Activated naive CD8-positive, alpha-beta T cell treated with anti-CD3 and anti-CD28 coated beads, Interleukin-2, amount 10 ng/mL, durations not matched to agents 7 days and 5 days (primary cell): ENCODE measurements at regions of chr10 and their contacts with region 1.

Region 1: DNA sequence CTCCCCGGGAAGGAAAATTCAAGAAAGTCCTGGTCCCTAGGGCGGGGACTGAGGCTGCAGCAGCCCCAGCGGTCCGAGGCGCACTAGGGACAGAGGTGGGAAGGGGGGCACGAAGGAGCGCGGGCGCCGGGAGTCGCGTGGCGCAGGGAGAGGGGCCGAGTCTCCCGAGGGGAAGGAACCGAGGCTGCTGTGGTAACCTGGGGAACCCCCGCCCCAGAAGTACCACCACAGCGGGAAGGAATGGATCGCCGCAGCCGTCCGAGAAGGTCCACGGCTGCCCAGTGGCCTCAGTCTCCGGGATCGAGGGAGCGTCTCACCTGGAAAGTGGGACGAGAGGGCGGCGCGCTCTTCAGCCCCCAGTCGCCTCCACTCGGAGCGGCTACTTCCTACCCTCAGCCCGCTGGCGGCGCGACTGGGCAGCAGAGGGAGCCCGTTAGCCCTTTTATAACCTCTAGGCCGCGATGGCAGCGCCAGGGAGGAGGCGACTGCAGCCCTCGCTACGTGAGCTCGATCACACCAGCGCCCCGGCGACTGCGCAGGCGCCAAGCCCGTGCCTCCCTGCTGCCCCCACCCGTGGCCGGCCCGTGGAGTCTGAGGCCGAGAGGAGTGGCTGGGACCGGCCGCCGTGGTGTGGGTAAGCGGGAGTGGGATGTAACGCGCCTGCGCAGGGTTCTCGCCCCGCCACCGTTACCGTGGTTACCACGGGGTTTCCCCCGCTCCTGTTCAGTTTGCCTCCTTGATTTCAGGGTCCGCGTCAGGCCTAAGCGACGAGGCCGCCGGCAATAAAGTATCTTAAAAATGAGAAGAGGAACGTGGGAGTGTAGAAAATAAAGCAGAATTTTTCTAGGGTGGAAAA is at the start of gene P4HA1:
- DNase-seq: peak; percentile 96
- ATAC-seq: peak; percentile 95
- H3K4me3 Mint-ChIP-seq: peak within 1 kb of the TSS; percentile 91
- H3K27ac Mint-ChIP-seq: peak within 1 kb of the TSS; percentile 92
- H3K4me1 Mint-ChIP-seq: peaks cover 30% of the 10 kb centered on the region
- H3K27me3 Mint-ChIP-seq: no peaks in the 10 kb centered on the region
- total RNA-seq, gene P4HA1: 47.3 to 51.2 TPM

Region 2: DNA sequence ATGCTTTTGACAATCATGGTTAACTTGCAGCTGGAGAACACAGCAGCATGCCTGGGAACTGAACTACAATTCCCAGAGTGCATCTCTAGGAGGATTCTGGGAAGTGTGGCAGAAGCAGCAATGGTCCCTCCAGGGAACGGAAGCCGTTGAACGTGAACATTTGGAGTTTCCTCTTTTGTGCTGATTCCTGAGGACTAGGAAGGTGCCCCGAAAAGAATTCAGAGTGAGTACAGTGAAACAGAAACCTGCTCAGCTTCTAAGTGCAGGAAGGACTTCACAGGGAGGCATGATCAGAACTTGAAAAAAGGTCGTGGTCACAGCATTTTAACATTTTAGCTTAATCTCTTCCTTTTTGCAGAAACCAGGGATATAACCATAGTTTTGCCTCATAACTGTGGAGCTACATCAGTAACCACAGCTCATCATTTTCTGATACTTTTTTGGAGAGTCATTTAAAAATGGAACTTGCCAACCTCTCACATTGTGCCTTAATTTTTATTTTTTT is 13.7 kb after region 1 on chr10 and contains the start of gene NUDT13:
- POLR2A ChIA-PET with region 1: interaction called, 32 read pairs
- DNase-seq: no peak
- ATAC-seq: peak; percentile 82
- H3K4me3 Mint-ChIP-seq: peak within 1 kb of the TSS; percentile 89
- H3K27ac Mint-ChIP-seq: peak within 1 kb of the TSS; percentile 83
- H3K4me1 Mint-ChIP-seq: peaks cover 16% of the 10 kb centered on the region
- H3K27me3 Mint-ChIP-seq: no peaks in the 10 kb centered on the region
- total RNA-seq, gene NUDT13: 2.1 to 2.8 TPM

Region 3: GRCh38 chr10:73167783-73168464 is 71.2 kb after region 1 on chr10 and contains the starts of genes ECD and FAM149B1:
- POLR2A ChIA-PET with region 1: interaction called, 13 read pairs
- DNase-seq: peak; percentile 92
- ATAC-seq: peak; percentile 96
- H3K4me3 Mint-ChIP-seq: peak within 1 kb of the TSS; percentile 99
- H3K27ac Mint-ChIP-seq: peak within 1 kb of the TSS; percentile 100
- H3K4me1 Mint-ChIP-seq: peaks cover 27% of the 10 kb centered on the region
- H3K27me3 Mint-ChIP-seq: no peaks in the 10 kb centered on the region
- total RNA-seq, gene ECD: 30.1 to 31.7 TPM
- total RNA-seq, gene FAM149B1: 15.6 to 18.4 TPM